Caco-2 (cell line): ENCODE measurements at regions of chr10 and their contacts with region 1.

Region 1: GRCh38 chr10:58856508-58857240 is 319.8 kb upstream of the PHYHIPL start:
- DNase-seq: peak; percentile 81 to 90
- H3K4me3 ChIP-seq: no peak overlapping the region
- H3K4me3 Mint-ChIP-seq: no peak overlapping the region
- H3K27ac Mint-ChIP-seq: peak overlapping the region; percentile 82
- H3K4me1 ChIP-seq: peaks cover 21% of the 10 kb centered on the region
- H3K4me1 Mint-ChIP-seq: peaks cover 12% of the 10 kb centered on the region
- H3K27me3 ChIP-seq: no peaks in the 10 kb centered on the region
- H3K27me3 Mint-ChIP-seq: no peaks in the 10 kb centered on the region
- CTCF ChIP-seq: no peak

Region 2: DNA sequence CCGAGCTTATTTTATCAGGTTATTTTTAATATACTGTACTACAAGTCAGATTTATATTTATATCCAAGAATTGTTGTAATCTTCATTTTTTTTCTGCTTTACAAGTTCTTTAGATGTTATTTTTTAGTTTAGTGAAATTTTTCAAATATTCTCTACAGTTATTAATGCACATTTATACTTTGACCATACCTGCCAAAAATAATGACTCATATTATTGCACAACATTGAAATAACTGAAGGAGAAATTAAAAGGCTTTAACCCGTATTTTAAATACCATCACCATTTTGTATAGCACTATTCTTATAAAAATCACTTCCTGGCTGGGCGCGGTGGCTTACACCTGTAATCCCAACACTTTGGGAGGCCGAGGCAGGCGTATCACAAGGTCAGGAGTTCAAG is 65.5 kb before region 1 on chr10:
- CTCF ChIA-PET with region 1: no interaction called
- POLR2A ChIA-PET with region 1: no interaction called
- intact Hi-C with region 1: no loop called
- DNase-seq: no peak
- H3K4me3 ChIP-seq: no peak overlapping the region
- H3K4me3 Mint-ChIP-seq: no peak overlapping the region
- H3K27ac Mint-ChIP-seq: no peak overlapping the region
- H3K4me1 ChIP-seq: no peaks in the 10 kb centered on the region
- H3K4me1 Mint-ChIP-seq: no peaks in the 10 kb centered on the region
- H3K27me3 ChIP-seq: no peaks in the 10 kb centered on the region
- H3K27me3 Mint-ChIP-seq: no peaks in the 10 kb centered on the region
- CTCF ChIP-seq: no peak

Region 3: GRCh38 chr10:58813573-58813972 is 43.1 kb before region 1 on chr10:
- CTCF ChIA-PET with region 1: no interaction called
- POLR2A ChIA-PET with region 1: no interaction called
- intact Hi-C with region 1: loop called (anchors 1 kb)
- DNase-seq: peak; percentile 81 to 84
- H3K4me3 ChIP-seq: no peak overlapping the region
- H3K4me3 Mint-ChIP-seq: peak overlapping the region; percentile 67
- H3K27ac Mint-ChIP-seq: peak overlapping the region; percentile 85
- H3K4me1 ChIP-seq: peaks cover 69% of the 10 kb centered on the region
- H3K4me1 Mint-ChIP-seq: peaks cover 80% of the 10 kb centered on the region
- H3K27me3 ChIP-seq: no peaks in the 10 kb centered on the region
- H3K27me3 Mint-ChIP-seq: no peaks in the 10 kb centered on the region
- CTCF ChIP-seq: no peak

Region 4: DNA sequence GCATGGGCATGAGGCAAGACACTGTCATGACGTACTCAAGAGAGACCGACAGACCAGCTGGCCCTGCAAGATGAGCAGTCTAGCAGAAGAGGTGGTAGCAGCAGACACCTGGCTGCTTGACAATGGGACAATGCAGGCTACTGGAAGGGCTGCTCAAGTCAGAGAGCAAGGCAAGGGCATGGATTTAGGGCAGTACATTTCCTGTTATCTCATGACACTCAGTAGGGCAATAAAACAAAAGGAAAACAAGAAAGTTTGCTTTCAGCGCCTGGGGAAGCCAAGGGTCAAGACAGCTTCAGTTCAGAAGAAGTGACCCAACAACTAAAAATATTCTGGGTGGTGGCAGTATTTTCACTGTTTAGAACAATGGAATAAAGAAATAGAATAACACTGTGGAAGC is 12.0 kb before region 1 on chr10:
- CTCF ChIA-PET with region 1: no interaction called
- POLR2A ChIA-PET with region 1: no interaction called
- intact Hi-C with region 1: loop called (anchors 1 kb)
- DNase-seq: peak; percentile 71 to 73
- H3K4me3 ChIP-seq: no peak overlapping the region
- H3K4me3 Mint-ChIP-seq: no peak overlapping the region
- H3K27ac Mint-ChIP-seq: peak overlapping the region; percentile 7
- H3K4me1 ChIP-seq: peaks cover 20% of the 10 kb centered on the region
- H3K4me1 Mint-ChIP-seq: peaks cover 30% of the 10 kb centered on the region
- H3K27me3 ChIP-seq: no peaks in the 10 kb centered on the region
- H3K27me3 Mint-ChIP-seq: no peaks in the 10 kb centered on the region
- CTCF ChIP-seq: no peak